Caco-2 (cell line): ENCODE measurements at regions of chr2 and their contacts with region 1.

Region 1: GRCh38 chr2:124046332-124046731 is 21.2 kb downstream of the CNTNAP5 start:
- DNase-seq: no peak
- H3K4me3 ChIP-seq: no peak overlapping the region
- H3K4me3 Mint-ChIP-seq: no peak overlapping the region
- H3K27ac Mint-ChIP-seq: no peak overlapping the region
- H3K4me1 ChIP-seq: peaks cover 19% of the 10 kb centered on the region
- H3K4me1 Mint-ChIP-seq: peaks cover 16% of the 10 kb centered on the region
- H3K27me3 ChIP-seq: no peaks in the 10 kb centered on the region
- H3K27me3 Mint-ChIP-seq: no peaks in the 10 kb centered on the region
- CTCF ChIP-seq: no peak

Region 2: GRCh38 chr2:124001696-124002430 is 44.5 kb before region 1 on chr2:
- CTCF ChIA-PET with region 1: no interaction called
- POLR2A ChIA-PET with region 1: no interaction called
- intact Hi-C with region 1: loop called (anchors 1 kb)
- DNase-seq: no peak
- H3K4me3 ChIP-seq: no peak overlapping the region
- H3K4me3 Mint-ChIP-seq: no peak overlapping the region
- H3K27ac Mint-ChIP-seq: no peak overlapping the region
- H3K4me1 ChIP-seq: no peaks in the 10 kb centered on the region
- H3K4me1 Mint-ChIP-seq: no peaks in the 10 kb centered on the region
- H3K27me3 ChIP-seq: no peaks in the 10 kb centered on the region
- H3K27me3 Mint-ChIP-seq: peaks cover 5% of the 10 kb centered on the region
- CTCF ChIP-seq: no peak

Region 3: DNA sequence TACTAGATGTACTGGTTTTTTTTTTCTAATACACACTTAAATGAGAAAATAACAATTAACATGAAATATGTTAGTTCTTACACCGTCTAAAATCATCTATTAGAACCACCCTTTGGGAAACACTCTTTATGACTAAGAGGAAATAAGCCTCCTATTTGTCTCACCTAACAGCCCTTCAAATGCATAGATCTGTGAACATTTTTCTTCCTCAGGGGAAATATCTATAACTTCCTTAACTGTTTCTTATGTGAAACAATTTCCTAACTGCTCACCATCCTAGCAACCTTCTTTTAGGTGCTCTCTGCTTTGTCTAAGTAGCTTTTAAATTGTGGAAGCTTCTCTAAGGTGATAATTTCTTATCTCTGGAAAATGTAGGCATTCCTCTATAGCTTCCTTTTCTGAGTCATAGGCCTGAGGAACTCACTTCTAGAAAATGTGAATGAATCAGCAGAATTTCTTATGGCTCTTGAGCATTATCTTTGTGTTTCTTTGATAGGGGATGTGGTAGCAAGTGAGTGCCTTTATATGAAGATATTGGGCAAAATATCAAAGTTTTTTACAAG is 34.9 kb after region 1 on chr2:
- CTCF ChIA-PET with region 1: no interaction called
- POLR2A ChIA-PET with region 1: no interaction called
- intact Hi-C with region 1: loop called (anchors 2 kb)
- DNase-seq: no peak
- H3K4me3 ChIP-seq: no peak overlapping the region
- H3K4me3 Mint-ChIP-seq: no peak overlapping the region
- H3K27ac Mint-ChIP-seq: no peak overlapping the region
- H3K4me1 ChIP-seq: peaks cover 8% of the 10 kb centered on the region
- H3K4me1 Mint-ChIP-seq: no peaks in the 10 kb centered on the region
- H3K27me3 ChIP-seq: no peaks in the 10 kb centered on the region
- H3K27me3 Mint-ChIP-seq: no peaks in the 10 kb centered on the region
- CTCF ChIP-seq: no peak